Endothelial cell of umbilical vein (primary cell): ENCODE measurements at regions of chr1 and their contacts with region 1.

Region 1: GRCh38 chr1:165597883-165598675 is 33.0 kb upstream of the MGST3 start:
- DNase-seq: peak; percentile 99
- H3K4me3 ChIP-seq: peak overlapping the region; percentile 4 to 62 (median 58)
- H3K27ac ChIP-seq: peak overlapping the region; percentile 87
- H3K4me1 ChIP-seq: peaks cover 10% of the 10 kb centered on the region
- H3K27me3 ChIP-seq: peaks cover 11 to 19% of the 10 kb centered on the region in 2 experiments
- CTCF ChIP-seq: no peak
- POLR2A ChIP-seq: no peak

Region 2: GRCh38 chr1:165257969-165258459 is 340.1 kb before region 1 on chr1:
- CTCF ChIA-PET with region 1: interaction called, 48 read pairs
- POLR2A ChIA-PET with region 1: no interaction called
- dilution Hi-C with region 1: no loop called
- intact Hi-C with region 1: loop called (anchors 1 kb)
- DNase-seq: peak; percentile 56
- H3K4me3 ChIP-seq: no peak overlapping the region
- H3K27ac ChIP-seq: no peak overlapping the region
- H3K4me1 ChIP-seq: no peaks in the 10 kb centered on the region
- H3K27me3 ChIP-seq: no peaks in the 10 kb centered on the region
- CTCF ChIP-seq: peak; percentile 69 to 71
- POLR2A ChIP-seq: no peak

Region 3: GRCh38 chr1:165350840-165351239 is 247.2 kb before region 1 on chr1:
- CTCF ChIA-PET with region 1: no interaction called
- POLR2A ChIA-PET with region 1: no interaction called
- dilution Hi-C with region 1: no loop called
- intact Hi-C with region 1: no loop called
- DNase-seq: no peak
- H3K4me3 ChIP-seq: no peak overlapping the region
- H3K27ac ChIP-seq: no peak overlapping the region
- H3K4me1 ChIP-seq: no peaks in the 10 kb centered on the region
- H3K27me3 ChIP-seq: peaks cover 73 to 91% of the 10 kb centered on the region in 2 experiments
- CTCF ChIP-seq: no peak
- POLR2A ChIP-seq: no peak

Region 4: GRCh38 chr1:165383067-165383466 is 215.0 kb before region 1 on chr1:
- CTCF ChIA-PET with region 1: interaction called, 22 read pairs
- POLR2A ChIA-PET with region 1: no interaction called
- dilution Hi-C with region 1: no loop called
- intact Hi-C with region 1: no loop called
- DNase-seq: no peak
- H3K4me3 ChIP-seq: no peak overlapping the region
- H3K27ac ChIP-seq: no peak overlapping the region
- H3K4me1 ChIP-seq: no peaks in the 10 kb centered on the region
- H3K27me3 ChIP-seq: peaks cover 13 to 16% of the 10 kb centered on the region in 2 experiments
- CTCF ChIP-seq: no peak
- POLR2A ChIP-seq: no peak

Region 5: GRCh38 chr1:165444897-165445370 is 153.1 kb before region 1 on chr1 and contains the start of gene RXRG:
- CTCF ChIA-PET with region 1: no interaction called
- POLR2A ChIA-PET with region 1: no interaction called
- dilution Hi-C with region 1: no loop called
- intact Hi-C with region 1: no loop called
- DNase-seq: peak; percentile 9
- H3K4me3 ChIP-seq: no peak within 1 kb of the TSS
- H3K27ac ChIP-seq: no peak within 1 kb of the TSS
- H3K4me1 ChIP-seq: no peaks in the 10 kb centered on the region
- H3K27me3 ChIP-seq: peaks cover 37 to 51% of the 10 kb centered on the region in 2 experiments
- CTCF ChIP-seq: no peak
- POLR2A ChIP-seq: no peak
- total RNA-seq, gene RXRG: not detected in 2 replicates

Region 6: GRCh38 chr1:165630629-165631341 is 32.7 kb after region 1 on chr1 and contains the start of gene MGST3:
- CTCF ChIA-PET with region 1: interaction called, 20 read pairs
- POLR2A ChIA-PET with region 1: no interaction called
- dilution Hi-C with region 1: no loop called
- intact Hi-C with region 1: loop called (anchors 1 kb)
- DNase-seq: peak; percentile 97
- H3K4me3 ChIP-seq: peak within 1 kb of the TSS; percentile 88 to 94 (median 89)
- H3K27ac ChIP-seq: peak within 1 kb of the TSS; percentile 73
- H3K4me1 ChIP-seq: peaks cover 19% of the 10 kb centered on the region
- H3K27me3 ChIP-seq: peaks cover 4 to 9% of the 10 kb centered on the region in 2 experiments
- CTCF ChIP-seq: no peak
- POLR2A ChIP-seq: peak; percentile 86
- total RNA-seq, gene MGST3: 164 and 196 TPM in 2 replicates

Region 7: DNA sequence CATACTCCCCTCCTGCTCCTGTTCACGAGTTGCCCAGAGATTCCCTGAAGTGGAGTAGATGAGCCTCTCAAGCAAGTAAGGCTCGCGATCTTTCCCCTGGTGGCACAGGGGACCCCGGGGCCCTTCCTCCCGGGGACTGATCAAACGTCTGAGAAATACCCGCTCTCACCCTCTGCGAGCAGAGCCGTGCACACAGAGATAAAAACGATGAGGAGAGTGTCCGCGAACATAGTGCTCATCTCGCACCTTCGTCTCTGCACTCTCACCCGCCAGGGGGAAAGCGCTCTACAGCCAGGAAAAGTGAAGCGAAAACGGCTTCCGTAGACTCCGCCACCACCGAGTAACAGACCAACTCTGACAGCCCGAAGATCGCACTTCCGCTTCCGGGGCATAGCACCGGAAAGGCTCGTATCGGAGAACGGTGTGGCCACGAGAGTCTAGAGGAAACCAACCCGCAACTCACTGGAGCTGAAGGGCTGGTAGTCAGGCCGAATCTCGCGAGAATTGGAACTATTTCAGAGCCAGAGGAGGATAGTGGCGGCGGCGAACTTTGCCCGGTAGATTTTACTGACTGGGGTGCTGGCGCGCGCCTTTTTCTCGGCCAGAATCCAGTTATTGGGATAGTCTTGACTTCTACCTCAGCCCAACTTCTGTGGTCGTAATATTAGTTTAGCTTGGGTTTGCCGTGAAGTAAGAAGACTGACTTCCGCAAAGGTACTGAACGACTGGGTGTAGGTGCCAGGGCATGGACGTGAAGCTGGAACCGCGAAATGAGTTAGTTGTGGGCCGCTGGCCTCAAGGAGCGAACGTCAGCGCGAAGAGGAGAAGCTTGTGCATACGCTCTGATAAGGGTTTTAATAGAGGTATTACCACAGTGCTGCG is 170.7 kb after region 1 on chr1 and contains the start of gene TMCO1:
- CTCF ChIA-PET with region 1: interaction called, 7 read pairs
- POLR2A ChIA-PET with region 1: no interaction called
- dilution Hi-C with region 1: no loop called
- intact Hi-C with region 1: loop called (anchors 1 kb)
- DNase-seq: peak; percentile 97
- H3K4me3 ChIP-seq: peak within 1 kb of the TSS; percentile 37 to 92 (median 75)
- H3K27ac ChIP-seq: peak within 1 kb of the TSS; percentile 68
- H3K4me1 ChIP-seq: peaks cover 18% of the 10 kb centered on the region
- H3K27me3 ChIP-seq: no peaks in the 10 kb centered on the region
- CTCF ChIP-seq: peak in 1 of 2 donors; percentile 20
- POLR2A ChIP-seq: peak; percentile 93
- total RNA-seq, gene TMCO1: 80.0 and 86.0 TPM in 2 replicates

Region 8: GRCh38 chr1:165928075-165928731 is 330.1 kb after region 1 on chr1:
- CTCF ChIA-PET with region 1: interaction called, 18 read pairs
- POLR2A ChIA-PET with region 1: no interaction called
- dilution Hi-C with region 1: no loop called
- intact Hi-C with region 1: no loop called
- DNase-seq: peak; percentile 43
- H3K4me3 ChIP-seq: no peak overlapping the region
- H3K27ac ChIP-seq: no peak overlapping the region
- H3K4me1 ChIP-seq: no peaks in the 10 kb centered on the region
- H3K27me3 ChIP-seq: no peaks in the 10 kb centered on the region
- CTCF ChIP-seq: peak; percentile 71 to 73
- POLR2A ChIP-seq: no peak